ENCODE measurements at regions of chr12 and their contacts with region 1.

Region 1: DNA sequence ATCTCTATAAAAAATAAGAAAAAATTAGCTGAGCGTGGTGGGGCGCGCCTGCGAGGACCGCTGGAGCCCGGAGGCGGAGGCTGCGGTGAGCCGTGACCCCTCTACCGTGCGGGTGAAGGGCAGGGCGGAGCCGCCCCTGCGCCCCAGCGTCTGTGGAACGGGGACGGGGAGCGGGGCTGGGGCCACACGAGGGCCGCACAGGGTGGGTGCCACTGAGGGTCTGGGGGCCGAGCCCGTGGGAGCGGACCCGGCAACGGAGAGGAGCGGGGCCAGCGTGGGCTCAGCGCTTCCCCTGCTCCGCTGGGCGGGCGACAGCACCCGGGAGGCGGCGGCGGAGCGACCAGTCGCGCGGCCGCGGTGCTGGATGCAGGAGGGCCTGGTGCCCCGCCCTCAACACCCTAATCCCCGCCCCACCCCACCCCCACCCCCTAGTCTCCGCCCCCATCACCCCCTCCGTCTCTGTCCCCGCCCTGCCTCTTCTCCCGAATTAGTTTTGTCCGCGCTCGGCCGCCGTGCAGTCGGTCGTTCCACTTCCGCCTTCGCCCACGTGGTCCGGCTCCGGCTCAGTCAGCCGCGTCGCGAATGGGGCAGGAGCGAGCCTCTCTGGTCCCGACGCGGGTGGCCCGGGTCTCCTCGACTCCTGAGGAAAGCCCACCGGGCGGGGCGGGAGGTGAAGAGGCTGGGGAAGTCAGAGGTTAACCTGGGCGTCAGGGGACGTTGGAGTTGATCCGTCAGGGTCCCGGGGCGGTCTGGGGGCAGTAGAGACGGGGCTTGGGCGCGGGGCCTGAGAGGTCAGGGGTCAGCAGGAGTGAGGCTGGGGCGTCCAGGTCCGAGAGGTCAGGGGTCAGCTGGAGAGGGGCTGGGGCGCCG is at the start of gene PUS1:
- DNase-seq: peak; percentile 95
- ATAC-seq: peak; percentile 81
- H3K4me3 Mint-ChIP-seq: peak within 1 kb of the TSS; percentile 98
- H3K27ac Mint-ChIP-seq: peak within 1 kb of the TSS; percentile 97
- H3K4me1 Mint-ChIP-seq: peaks cover 31% of the 10 kb centered on the region
- H3K27me3 Mint-ChIP-seq: no peaks in the 10 kb centered on the region
- total RNA-seq, gene PUS1: 57.3 to 64.7 TPM

Region 2: DNA sequence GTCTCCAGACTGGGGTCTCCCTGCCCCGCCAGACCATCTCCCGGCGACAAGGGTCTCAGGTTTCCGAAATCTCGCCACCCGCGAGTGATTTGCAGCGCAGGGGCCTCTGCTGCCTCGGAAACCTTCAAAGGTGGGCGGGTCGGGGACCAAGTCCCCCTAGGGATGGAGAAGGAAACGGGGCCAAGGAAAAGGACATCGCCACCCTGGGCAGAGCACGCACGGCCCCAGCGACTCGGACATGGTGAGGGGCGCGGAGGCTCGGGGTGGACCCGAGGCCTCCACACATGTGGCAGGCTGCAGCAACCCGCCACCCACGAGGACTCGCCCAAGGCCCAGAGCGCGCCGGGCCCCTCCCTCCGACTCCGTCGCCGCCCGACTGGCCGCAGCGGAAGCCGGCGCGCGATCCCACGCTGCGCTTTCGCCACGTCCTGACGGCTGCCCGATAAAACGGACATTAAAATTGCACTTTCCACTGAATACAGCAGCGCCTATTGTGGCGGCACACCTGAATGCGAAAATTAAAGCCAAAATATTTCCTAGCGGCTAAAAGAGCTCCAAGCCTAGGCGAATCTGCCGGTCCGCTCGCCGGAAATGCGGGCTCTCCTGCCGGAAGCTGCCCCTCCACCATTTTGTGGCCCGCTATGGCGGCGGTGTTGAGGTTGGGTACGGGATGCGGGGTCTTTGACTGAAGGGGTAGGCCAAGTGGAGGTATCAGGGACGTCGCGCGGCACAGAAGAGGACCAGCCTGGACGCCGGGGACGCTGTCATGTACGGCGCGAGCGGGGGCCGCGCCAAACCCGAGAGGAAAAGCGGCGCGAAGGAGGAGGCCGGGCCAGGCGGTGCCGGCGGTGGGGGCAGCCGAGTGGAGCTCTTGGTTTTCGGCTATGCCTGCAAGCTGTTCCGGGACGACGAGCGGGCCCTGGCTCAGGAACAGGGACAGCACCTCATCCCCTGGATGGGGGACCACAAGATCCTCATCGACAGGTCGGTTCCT is 218.2 kb before region 1 on chr12 and contains the start of gene SFSWAP:
- CTCF ChIA-PET with region 1: no interaction called
- POLR2A ChIA-PET with region 1: interaction called, 12 read pairs
- DNase-seq: peak; percentile 78
- ATAC-seq: peak; percentile 90
- H3K4me3 Mint-ChIP-seq: peak within 1 kb of the TSS; percentile 97
- H3K27ac Mint-ChIP-seq: peak within 1 kb of the TSS; percentile 96
- H3K4me1 Mint-ChIP-seq: peaks cover 25% of the 10 kb centered on the region
- H3K27me3 Mint-ChIP-seq: peaks cover 2% of the 10 kb centered on the region
- total RNA-seq, gene SFSWAP: 50.4 to 53.6 TPM

Region 3: GRCh38 chr12:131720921-131721320 is 208.0 kb before region 1 on chr12:
- CTCF ChIA-PET with region 1: no interaction called
- POLR2A ChIA-PET with region 1: no interaction called
- DNase-seq: no peak
- ATAC-seq: no peak
- H3K4me3 Mint-ChIP-seq: no peak overlapping the region
- H3K27ac Mint-ChIP-seq: peak overlapping the region; percentile 23
- H3K4me1 Mint-ChIP-seq: peaks cover 23% of the 10 kb centered on the region
- H3K27me3 Mint-ChIP-seq: no peaks in the 10 kb centered on the region

Region 4: GRCh38 chr12:131912518-131913294 is 16.2 kb before region 1 on chr12:
- CTCF ChIA-PET with region 1: no interaction called
- POLR2A ChIA-PET with region 1: no interaction called
- DNase-seq: no peak
- ATAC-seq: no peak
- H3K4me3 Mint-ChIP-seq: no peak overlapping the region
- H3K27ac Mint-ChIP-seq: no peak overlapping the region
- H3K4me1 Mint-ChIP-seq: no peaks in the 10 kb centered on the region
- H3K27me3 Mint-ChIP-seq: no peaks in the 10 kb centered on the region

Region 5: DNA sequence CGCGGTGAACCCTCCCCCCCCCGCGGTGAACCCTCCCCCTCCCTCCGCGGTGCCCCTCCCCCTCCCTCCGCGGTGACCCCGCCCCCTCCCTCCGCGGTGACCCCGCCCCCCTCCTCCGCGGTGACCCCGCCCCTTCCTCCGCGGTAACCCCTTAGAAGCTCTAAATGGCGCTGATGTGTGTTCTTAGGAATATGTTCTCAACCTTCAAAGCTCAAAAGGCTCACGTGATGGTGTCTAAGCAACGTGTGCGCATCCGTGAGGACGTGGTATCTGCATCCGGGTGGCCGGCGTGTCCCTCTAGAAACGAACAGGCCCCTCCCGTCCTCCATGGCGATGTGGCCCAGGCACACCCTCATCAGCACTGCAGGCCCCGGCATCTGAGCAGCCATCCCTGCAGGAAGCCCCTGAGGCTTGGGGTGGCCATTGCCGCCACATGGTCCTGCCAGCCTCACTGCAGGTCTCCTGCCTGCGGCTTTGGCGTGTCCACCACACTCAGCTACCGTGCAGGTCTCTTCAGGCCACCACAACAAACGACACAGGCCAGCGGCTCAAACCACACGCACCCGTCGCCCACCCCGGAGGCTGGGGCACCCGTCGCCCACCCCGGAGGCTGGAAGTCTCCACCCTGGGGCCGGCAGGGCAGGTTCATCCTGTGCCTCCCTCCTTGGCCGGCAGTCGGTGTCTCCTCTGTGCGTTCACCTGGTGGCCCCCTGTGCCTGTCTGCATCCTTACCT is 546.5 kb after region 1 on chr12:
- CTCF ChIA-PET with region 1: no interaction called
- POLR2A ChIA-PET with region 1: no interaction called
- DNase-seq: peak; percentile 55
- ATAC-seq: peak; percentile 48
- H3K4me3 Mint-ChIP-seq: peak overlapping the region; percentile 55
- H3K27ac Mint-ChIP-seq: peak overlapping the region; percentile 88
- H3K4me1 Mint-ChIP-seq: peaks cover 38% of the 10 kb centered on the region
- H3K27me3 Mint-ChIP-seq: no peaks in the 10 kb centered on the region